CD4-positive, alpha-beta memory T cell (primary cell): ENCODE measurements at regions of chr7 and their contacts with region 1.

Region 1: GRCh38 chr7:2354186-2354938 is at the start of gene EIF3B:
- DNase-seq: peak; percentile 91 to 96 (median 95)
- H3K4me3 ChIP-seq: peak within 1 kb of the TSS; percentile 68 to 90
- H3K4me3 Mint-ChIP-seq: peak within 1 kb of the TSS; percentile 89 to 98 (median 95)
- H3K27ac ChIP-seq: peak within 1 kb of the TSS; percentile 95
- H3K27ac Mint-ChIP-seq: peak within 1 kb of the TSS; percentile 99 to 100 (median 100)
- H3K4me1 ChIP-seq: peaks cover 46% of the 10 kb centered on the region
- H3K4me1 Mint-ChIP-seq: peaks cover 16 to 48% (median 35%) of the 10 kb centered on the region in 4 donors
- H3K27me3 ChIP-seq: no peaks in the 10 kb centered on the region
- H3K27me3 Mint-ChIP-seq: no peaks in the 10 kb centered on the region
- total RNA-seq, gene EIF3B: 126 to 138 TPM

Region 2: GRCh38 chr7:1503816-1504775 is 850.3 kb before region 1 on chr7 and contains the start of gene INTS1:
- CTCF ChIA-PET with region 1: no interaction called
- POLR2A ChIA-PET with region 1: no interaction called
- intact Hi-C with region 1: loop called (anchors 1 kb)
- DNase-seq: peak; percentile 88 to 90 (median 89)
- H3K4me3 ChIP-seq: peak within 1 kb of the TSS; percentile 57 to 89
- H3K4me3 Mint-ChIP-seq: peak within 1 kb of the TSS; percentile 83 to 92 (median 86)
- H3K27ac ChIP-seq: peak within 1 kb of the TSS; percentile 59
- H3K27ac Mint-ChIP-seq: peak within 1 kb of the TSS; percentile 68 to 87 (median 81)
- H3K4me1 ChIP-seq: peaks cover 34% of the 10 kb centered on the region
- H3K4me1 Mint-ChIP-seq: peaks cover 21 to 40% (median 33%) of the 10 kb centered on the region in 4 donors
- H3K27me3 ChIP-seq: no peaks in the 10 kb centered on the region
- H3K27me3 Mint-ChIP-seq: no peaks in the 10 kb centered on the region
- total RNA-seq, gene INTS1: 135 to 137 TPM

Region 3: GRCh38 chr7:1812509-1813393 is 541.6 kb before region 1 on chr7:
- CTCF ChIA-PET with region 1: no interaction called
- POLR2A ChIA-PET with region 1: no interaction called
- intact Hi-C with region 1: loop called (anchors 5 kb)
- DNase-seq: no peak
- H3K4me3 ChIP-seq: no peak overlapping the region
- H3K4me3 Mint-ChIP-seq: no peak overlapping the region
- H3K27ac ChIP-seq: no peak overlapping the region
- H3K27ac Mint-ChIP-seq: no peak overlapping the region
- H3K4me1 ChIP-seq: no peaks in the 10 kb centered on the region
- H3K4me1 Mint-ChIP-seq: peaks cover 0 to 5% (median 1%) of the 10 kb centered on the region in 4 donors
- H3K27me3 ChIP-seq: no peaks in the 10 kb centered on the region
- H3K27me3 Mint-ChIP-seq: no peaks in the 10 kb centered on the region

Region 4: GRCh38 chr7:2232766-2233520 is 121.4 kb before region 1 on chr7 and contains the start of gene MAD1L1:
- CTCF ChIA-PET with region 1: no interaction called
- POLR2A ChIA-PET with region 1: interaction called, 3 read pairs
- intact Hi-C with region 1: loop called (anchors 1 kb)
- DNase-seq: peak; percentile 86 to 88 (median 88)
- H3K4me3 ChIP-seq: peak within 1 kb of the TSS; percentile 95 to 98
- H3K4me3 Mint-ChIP-seq: peak within 1 kb of the TSS; percentile 87 to 99 (median 94)
- H3K27ac ChIP-seq: peak within 1 kb of the TSS; percentile 70
- H3K27ac Mint-ChIP-seq: peak within 1 kb of the TSS; percentile 76 to 97 (median 90)
- H3K4me1 ChIP-seq: peaks cover 32% of the 10 kb centered on the region
- H3K4me1 Mint-ChIP-seq: peaks cover 13 to 45% (median 32%) of the 10 kb centered on the region in 4 donors
- H3K27me3 ChIP-seq: no peaks in the 10 kb centered on the region
- H3K27me3 Mint-ChIP-seq: no peaks in the 10 kb centered on the region
- total RNA-seq, gene MAD1L1: 89.9 to 94.2 TPM

Region 5: DNA sequence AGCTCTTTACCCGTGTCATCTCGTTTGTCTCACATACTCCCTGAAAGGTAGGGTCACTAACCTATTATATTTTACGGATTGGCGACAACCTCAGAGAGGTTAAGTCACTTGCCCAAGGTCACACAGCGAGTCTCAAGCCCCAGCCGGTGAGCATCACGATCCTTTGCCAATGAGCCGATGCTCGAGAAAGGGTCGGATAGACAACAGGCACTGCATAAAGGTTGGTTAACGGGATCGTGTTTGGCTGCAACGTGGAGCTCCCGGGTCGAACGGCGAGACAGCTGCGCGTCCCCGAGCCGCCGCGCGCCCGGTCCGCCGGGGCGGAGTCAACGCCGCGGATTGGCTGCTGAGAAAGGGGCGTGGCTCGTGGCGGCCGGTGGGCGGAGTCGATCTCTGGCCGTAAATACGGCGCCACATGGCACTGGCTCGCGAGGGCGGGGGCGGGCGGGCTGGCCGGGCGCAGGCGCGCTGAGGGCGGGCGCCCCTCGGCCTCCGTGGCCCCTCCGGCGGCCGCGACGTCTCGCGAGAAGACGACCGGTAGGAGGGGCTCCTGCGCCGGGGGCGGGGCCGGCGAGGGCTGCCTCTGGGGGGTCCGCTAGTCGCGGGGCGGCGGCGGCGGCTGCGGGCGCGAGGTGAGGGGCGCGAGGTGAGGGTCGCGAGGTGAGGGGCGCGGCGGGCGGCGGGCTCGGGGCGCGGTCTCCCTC is 48.8 kb after region 1 on chr7 and contains the start of gene CHST12:
- CTCF ChIA-PET with region 1: interaction called, 3 read pairs
- POLR2A ChIA-PET with region 1: interaction called, 52 read pairs
- intact Hi-C with region 1: loop called (anchors 1 kb)
- DNase-seq: peak; percentile 93 to 94 (median 93)
- H3K4me3 ChIP-seq: peak within 1 kb of the TSS; percentile 80 to 91
- H3K4me3 Mint-ChIP-seq: peak within 1 kb of the TSS; percentile 87 to 96 (median 90)
- H3K27ac ChIP-seq: peak within 1 kb of the TSS; percentile 70
- H3K27ac Mint-ChIP-seq: peak within 1 kb of the TSS; percentile 90 to 96 (median 92)
- H3K4me1 ChIP-seq: peaks cover 53% of the 10 kb centered on the region
- H3K4me1 Mint-ChIP-seq: peaks cover 37 to 64% (median 47%) of the 10 kb centered on the region in 4 donors
- H3K27me3 ChIP-seq: no peaks in the 10 kb centered on the region
- H3K27me3 Mint-ChIP-seq: no peaks in the 10 kb centered on the region
- total RNA-seq, gene CHST12: 29.5 to 30.7 TPM

Region 6: DNA sequence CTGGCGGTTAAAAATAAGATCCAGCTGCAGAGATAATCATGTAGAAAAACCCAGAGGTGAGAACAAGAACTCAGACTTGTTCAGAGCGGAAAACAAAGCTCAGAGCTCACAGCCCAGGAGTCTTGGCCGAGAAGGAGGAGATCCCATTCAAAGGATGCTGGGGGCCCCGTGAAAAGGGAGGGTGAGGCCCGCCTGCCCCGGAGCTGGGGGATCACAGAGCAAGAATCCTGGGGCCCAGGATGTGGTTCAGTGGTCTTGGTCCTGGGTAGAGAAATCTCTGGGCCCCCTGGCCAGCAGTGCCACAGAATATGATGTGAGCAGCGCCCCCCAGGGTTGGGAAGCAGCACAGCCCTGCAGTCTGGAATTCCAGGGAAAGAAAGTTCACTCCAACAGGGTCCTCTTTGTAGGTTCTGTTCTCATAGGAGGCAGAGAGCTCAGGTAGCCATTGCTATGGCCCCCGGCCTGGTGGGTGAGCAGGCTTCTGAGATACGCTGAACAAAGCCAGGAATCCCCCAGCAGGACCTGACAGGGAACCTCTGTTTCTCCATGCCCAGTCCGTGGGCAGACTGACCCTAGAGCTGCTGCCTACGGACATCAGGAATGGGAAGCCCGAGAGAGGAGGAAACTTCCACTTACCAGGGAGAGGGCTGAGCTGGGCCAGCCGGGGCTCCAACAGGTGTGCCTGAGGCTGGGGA is 567.4 kb after region 1 on chr7:
- CTCF ChIA-PET with region 1: no interaction called
- POLR2A ChIA-PET with region 1: no interaction called
- intact Hi-C with region 1: no loop called
- DNase-seq: no peak
- H3K4me3 ChIP-seq: no peak overlapping the region
- H3K4me3 Mint-ChIP-seq: peak overlapping the region in 1 of 8 donors; percentile 13
- H3K27ac ChIP-seq: no peak overlapping the region
- H3K27ac Mint-ChIP-seq: peak overlapping the region in 2 of 7 donors; percentile 36 to 68
- H3K4me1 ChIP-seq: no peaks in the 10 kb centered on the region
- H3K4me1 Mint-ChIP-seq: peaks cover 0 to 1% (median 0%) of the 10 kb centered on the region in 4 donors
- H3K27me3 ChIP-seq: no peaks in the 10 kb centered on the region
- H3K27me3 Mint-ChIP-seq: no peaks in the 10 kb centered on the region